Heart right ventricle (tissue), 16 donors: ENCODE measurements at regions of chr17 and their contacts with region 1.

Region 1: DNA sequence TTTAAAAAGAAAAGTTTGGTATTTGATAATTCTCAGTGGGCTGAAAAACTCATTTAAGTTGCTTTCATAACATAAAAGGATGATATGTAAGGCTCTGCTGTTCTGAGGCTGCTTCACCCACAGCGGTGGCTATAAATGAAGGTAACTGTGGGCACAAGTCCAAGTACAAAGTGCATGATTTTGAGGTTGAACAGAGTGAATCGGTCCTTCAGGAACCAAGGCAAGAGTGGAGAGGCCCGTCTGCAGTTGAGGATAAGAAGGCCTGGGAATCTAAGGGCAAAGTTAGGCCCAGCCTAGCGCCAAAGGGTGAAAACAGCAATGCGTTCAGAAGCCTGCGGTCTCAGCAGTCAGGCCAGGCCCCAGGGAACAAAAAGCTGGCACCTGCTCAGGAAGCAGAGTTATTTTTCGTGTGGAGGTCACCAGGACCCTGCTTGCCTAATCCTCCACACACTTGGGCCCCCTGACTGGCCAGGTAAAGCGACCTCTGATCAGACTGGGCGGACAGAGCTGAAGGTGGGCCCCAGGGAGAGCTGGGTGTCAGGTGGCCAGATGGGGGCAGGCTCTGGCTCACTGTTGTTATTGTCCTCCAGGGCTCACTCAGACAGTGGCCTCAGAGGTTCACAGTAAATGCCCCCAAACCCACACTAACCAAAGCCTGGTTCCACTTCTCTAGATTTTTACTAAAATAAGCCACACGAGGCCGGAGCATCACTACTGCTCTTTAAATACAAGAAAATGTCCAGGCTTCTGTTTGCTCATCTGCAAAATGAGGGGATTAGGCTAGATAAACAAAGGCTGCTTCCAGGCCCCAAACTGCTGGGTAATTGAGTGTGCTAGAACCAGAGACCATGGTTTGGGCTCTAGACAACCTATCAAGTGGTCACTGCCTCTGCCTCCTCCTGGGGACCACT is 46.5 kb downstream of the TEX2 start:
- DNase-seq: peak; percentile 48 to 50
- ATAC-seq: peak; percentile 48 to 79 (median 72)
- H3K4me3 ChIP-seq: no peak overlapping the region
- H3K27ac ChIP-seq: peak overlapping the region; percentile 25 to 89 (median 78)
- H3K4me1 ChIP-seq: peaks cover 23 to 58% (median 50%) of the 10 kb centered on the region in 9 donors
- H3K27me3 ChIP-seq: no peaks in the 10 kb centered on the region
- CTCF ChIP-seq: peak in 6 of 9 donors; percentile 5 to 39 (median 21)

Region 2: DNA sequence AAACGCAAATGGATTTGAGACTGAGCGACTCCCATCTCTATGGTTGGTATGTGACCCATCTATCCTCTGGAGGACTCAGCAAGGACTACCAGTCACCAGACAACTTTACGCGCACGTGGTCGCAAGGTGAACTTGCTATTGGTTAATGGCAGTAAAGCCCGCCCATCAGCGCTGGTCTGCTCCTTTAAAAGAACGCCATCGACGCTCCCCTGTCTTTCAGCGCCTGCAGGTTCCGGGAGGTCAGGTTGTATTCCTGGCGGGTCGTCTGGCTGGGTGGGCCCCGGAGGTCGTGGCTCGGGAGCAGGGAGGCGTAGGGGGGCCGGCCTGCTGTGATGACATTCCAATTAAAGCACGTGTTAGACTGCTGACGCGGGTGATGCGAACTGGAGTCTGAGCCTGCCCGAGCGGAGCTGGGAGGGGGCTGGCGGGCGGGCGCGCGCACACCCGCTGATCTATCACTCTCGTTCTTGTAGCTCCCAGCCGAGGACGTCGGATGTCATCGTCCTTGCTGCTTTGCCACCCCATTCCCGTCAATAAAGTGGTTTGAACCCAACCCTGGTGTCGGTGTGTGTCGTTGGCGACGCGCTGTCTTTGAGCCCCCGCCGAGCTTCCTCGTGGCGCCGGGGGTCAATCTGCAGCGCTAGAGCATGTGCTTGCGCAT is 70.7 kb before region 1 on chr17:
- intact Hi-C with region 1: loop called in 3 of 10 experiments (anchors 5 to 10 kb)
- DNase-seq: peak; percentile 94 to 98
- ATAC-seq: peak; percentile 95 to 97 (median 96)
- H3K4me3 ChIP-seq: peak overlapping the region; percentile 64 to 94 (median 76)
- H3K27ac ChIP-seq: peak overlapping the region; percentile 85 to 99 (median 96)
- H3K4me1 ChIP-seq: peaks cover 6 to 45% (median 38%) of the 10 kb centered on the region in 9 donors
- H3K27me3 ChIP-seq: no peaks in the 10 kb centered on the region
- CTCF ChIP-seq: peak in 2 of 9 donors; percentile 9 to 28

Region 3: GRCh38 chr17:64155751-64156544 is 60.6 kb before region 1 on chr17:
- intact Hi-C with region 1: loop called in 3 of 10 experiments (anchors 5 to 10 kb)
- DNase-seq: peak; percentile 73 to 85
- ATAC-seq: peak; percentile 87 to 95 (median 90)
- H3K4me3 ChIP-seq: peak overlapping the region in 1 of 10 donors; percentile 2
- H3K27ac ChIP-seq: peak overlapping the region; percentile 86 to 96 (median 92)
- H3K4me1 ChIP-seq: peaks cover 39 to 88% (median 82%) of the 10 kb centered on the region in 9 donors
- H3K27me3 ChIP-seq: no peaks in the 10 kb centered on the region
- CTCF ChIP-seq: peak in 3 of 9 donors; percentile 24 to 37 (median 26)